ENCODE measurements at regions of chr7 and their contacts with region 1.

Region 1: GRCh38 chr7:82572195-82572880 is 128.8 kb upstream of the CACNA2D1 start:
- DNase-seq: peak; percentile 72
- H3K4me3 Mint-ChIP-seq: no peak overlapping the region
- H3K27ac Mint-ChIP-seq: no peak overlapping the region
- H3K4me1 Mint-ChIP-seq: no peaks in the 10 kb centered on the region
- H3K27me3 Mint-ChIP-seq: no peaks in the 10 kb centered on the region

Region 2: GRCh38 chr7:81482600-81483186 is 1089.6 kb before region 1 on chr7:
- CTCF ChIA-PET with region 1: interaction called, 6 read pairs
- POLR2A ChIA-PET with region 1: no interaction called
- intact Hi-C with region 1: loop called (anchors 2 kb)
- DNase-seq: no peak
- H3K4me3 Mint-ChIP-seq: no peak overlapping the region
- H3K27ac Mint-ChIP-seq: no peak overlapping the region
- H3K4me1 Mint-ChIP-seq: no peaks in the 10 kb centered on the region
- H3K27me3 Mint-ChIP-seq: no peaks in the 10 kb centered on the region

Region 3: GRCh38 chr7:81583882-81584533 is 988.3 kb before region 1 on chr7:
- CTCF ChIA-PET with region 1: no interaction called
- POLR2A ChIA-PET with region 1: no interaction called
- intact Hi-C with region 1: no loop called
- DNase-seq: no peak
- H3K4me3 Mint-ChIP-seq: no peak overlapping the region
- H3K27ac Mint-ChIP-seq: no peak overlapping the region
- H3K4me1 Mint-ChIP-seq: no peaks in the 10 kb centered on the region
- H3K27me3 Mint-ChIP-seq: no peaks in the 10 kb centered on the region

Region 4: GRCh38 chr7:82593780-82594179 is 21.4 kb after region 1 on chr7:
- CTCF ChIA-PET with region 1: no interaction called
- POLR2A ChIA-PET with region 1: no interaction called
- intact Hi-C with region 1: no loop called
- DNase-seq: no peak
- H3K4me3 Mint-ChIP-seq: no peak overlapping the region
- H3K27ac Mint-ChIP-seq: no peak overlapping the region
- H3K4me1 Mint-ChIP-seq: no peaks in the 10 kb centered on the region
- H3K27me3 Mint-ChIP-seq: no peaks in the 10 kb centered on the region